ENCODE measurements at regions of chr18 and their contacts with region 1.

Region 1: GRCh38 chr18:80108728-80109675 is at the start of gene ADNP2:
- DNase-seq: peak; percentile 97
- H3K4me3 ChIP-seq: peak within 1 kb of the TSS; percentile 68 to 89 (median 80)
- H3K27ac ChIP-seq: peak within 1 kb of the TSS; percentile 93 to 96 (median 95)
- H3K4me1 ChIP-seq: peaks cover 13 to 60% (median 38%) of the 10 kb centered on the region in 4 donors
- H3K27me3 ChIP-seq: no peaks in the 10 kb centered on the region
- CTCF ChIP-seq: no peak
- EP300 ChIP-seq: no peak
- POLR2A ChIP-seq: peak; percentile 10
- total RNA-seq, gene ADNP2: 17.1 to 18.9 (median 17.3) TPM

Region 2: DNA sequence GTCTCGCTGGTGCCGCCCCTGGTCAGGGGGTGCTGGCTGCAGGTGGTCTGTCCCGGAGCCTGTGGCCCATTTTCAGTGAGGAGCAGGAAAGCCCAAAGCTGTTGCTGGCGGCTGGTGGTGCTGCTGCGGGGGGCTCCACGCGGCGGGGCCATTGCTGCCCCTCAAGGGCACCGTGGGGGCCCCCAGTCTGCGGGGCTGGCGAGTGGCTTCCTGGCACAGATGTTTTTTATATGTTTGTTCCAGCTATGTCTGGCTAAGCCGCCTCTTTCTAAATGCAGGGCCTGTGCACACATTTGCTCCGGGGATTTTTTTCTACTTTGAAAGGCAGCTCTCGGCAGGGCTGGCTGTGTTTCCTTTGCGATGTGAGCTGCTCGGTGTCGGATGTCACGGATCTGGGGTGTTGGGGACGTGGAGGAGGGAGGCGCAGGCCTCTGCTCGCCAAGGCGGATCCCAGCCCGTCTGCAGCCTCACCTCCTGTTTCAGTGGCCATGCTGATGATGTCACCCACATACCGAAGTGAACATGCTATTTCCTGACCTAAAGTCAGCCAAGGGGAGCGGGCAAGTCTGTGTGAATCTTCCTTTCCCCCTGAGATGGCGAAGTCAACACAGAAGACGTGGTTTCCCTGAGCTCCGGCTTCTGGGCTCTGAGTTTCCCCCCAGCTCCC is 541.4 kb before region 1 on chr18:
- intact Hi-C with region 1: no loop called
- DNase-seq: no peak
- H3K4me3 ChIP-seq: peak overlapping the region in 1 of 4 donors; percentile 7
- H3K27ac ChIP-seq: peak overlapping the region in 3 of 4 donors; percentile 9 to 34 (median 28)
- H3K4me1 ChIP-seq: peaks cover 8 to 13% (median 10%) of the 10 kb centered on the region in 4 donors
- H3K27me3 ChIP-seq: no peaks in the 10 kb centered on the region
- CTCF ChIP-seq: no peak
- EP300 ChIP-seq: no peak
- POLR2A ChIP-seq: no peak

Region 3: GRCh38 chr18:79678665-79679110 is 430.3 kb before region 1 on chr18:
- intact Hi-C with region 1: no loop called
- DNase-seq: peak; percentile 96
- H3K4me3 ChIP-seq: peak overlapping the region; percentile 86 to 94 (median 93)
- H3K27ac ChIP-seq: peak overlapping the region; percentile 91 to 99 (median 96)
- H3K4me1 ChIP-seq: peaks cover 36 to 52% (median 47%) of the 10 kb centered on the region in 4 donors
- H3K27me3 ChIP-seq: no peaks in the 10 kb centered on the region
- CTCF ChIP-seq: no peak
- EP300 ChIP-seq: no peak
- POLR2A ChIP-seq: no peak

Region 4: DNA sequence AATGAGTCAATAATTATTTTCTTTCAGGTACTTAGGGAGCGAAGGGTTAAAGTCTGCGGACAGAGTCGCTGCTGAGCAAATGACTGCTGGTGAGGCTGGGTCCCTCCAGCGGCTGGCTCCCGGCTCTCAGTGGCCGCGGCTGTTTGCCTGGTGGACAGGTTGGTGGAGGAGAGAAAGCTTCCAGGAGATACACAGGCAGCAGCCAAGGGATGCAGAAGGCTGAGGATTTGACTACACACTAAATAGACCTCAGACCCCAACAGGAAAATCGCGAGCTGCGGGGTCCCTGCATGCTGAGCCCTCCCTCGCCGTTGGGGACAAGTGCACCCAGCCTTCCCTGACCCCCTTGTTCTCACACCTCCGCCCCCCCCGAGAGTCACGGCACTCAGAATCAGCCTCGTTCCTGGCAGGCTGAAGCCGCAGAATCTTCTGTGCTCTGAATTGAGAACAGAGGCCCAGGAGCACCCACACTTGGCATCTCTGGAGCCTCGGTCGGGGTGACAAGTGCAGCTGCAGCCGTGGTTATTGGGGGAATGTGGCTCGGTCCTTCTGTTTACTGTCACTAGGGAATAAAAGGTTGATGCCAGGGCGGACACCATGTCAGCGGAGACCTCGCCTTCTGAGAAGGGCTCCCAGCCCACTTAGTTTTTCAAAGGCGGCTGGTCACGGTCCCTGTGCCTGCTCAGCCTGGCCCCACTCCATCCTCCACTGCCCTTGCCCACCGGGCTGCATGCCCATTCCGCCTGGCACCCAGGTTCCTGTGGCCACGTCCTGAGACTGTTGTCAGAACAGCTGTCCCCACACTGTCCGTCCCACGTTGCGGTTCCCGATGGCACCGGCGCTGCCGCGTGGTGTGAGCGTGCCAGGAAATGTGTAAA is 231.5 kb before region 1 on chr18:
- intact Hi-C with region 1: no loop called
- DNase-seq: no peak
- H3K4me3 ChIP-seq: no peak overlapping the region
- H3K27ac ChIP-seq: no peak overlapping the region
- H3K4me1 ChIP-seq: peaks cover 0 to 9% (median 0%) of the 10 kb centered on the region in 4 donors
- H3K27me3 ChIP-seq: peaks cover 0 to 55% (median 0%) of the 10 kb centered on the region in 4 donors
- CTCF ChIP-seq: no peak
- EP300 ChIP-seq: no peak
- POLR2A ChIP-seq: no peak

Region 5: DNA sequence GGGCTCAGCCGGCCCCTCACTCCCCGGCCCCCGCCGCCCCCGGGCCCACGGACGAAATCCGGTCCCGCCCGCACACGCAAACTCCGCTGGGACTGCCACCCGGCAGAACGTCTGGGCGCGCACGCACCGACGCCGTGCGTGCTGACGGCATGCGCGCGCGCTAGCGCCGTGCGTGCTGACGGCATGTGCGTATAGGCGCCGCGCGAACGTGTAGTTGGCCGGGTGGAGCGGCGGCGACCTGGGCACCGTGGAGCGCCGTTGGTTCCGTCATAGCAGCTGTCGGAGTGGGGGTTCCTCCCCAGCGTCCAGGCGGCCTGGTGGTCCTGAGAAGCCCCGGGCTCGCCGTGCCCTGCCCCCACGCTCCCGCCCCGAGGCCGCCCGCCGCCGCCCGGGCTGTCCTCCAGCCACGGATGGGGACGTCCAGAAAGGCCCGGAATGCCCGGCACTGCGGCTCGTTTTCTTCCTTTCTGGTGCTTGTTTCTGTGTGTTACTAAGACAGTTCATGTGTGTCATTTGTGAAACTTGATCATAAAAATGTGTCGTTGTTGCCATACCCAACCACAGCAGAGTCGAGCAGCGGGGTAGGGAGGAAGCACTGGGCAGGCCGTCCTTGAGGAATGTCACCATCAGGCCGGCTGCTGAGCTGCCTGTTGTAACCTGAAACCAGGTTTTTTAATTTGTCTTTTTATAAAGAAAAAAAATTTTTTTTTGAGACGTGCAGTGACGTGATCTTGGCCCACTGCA is 120.4 kb before region 1 on chr18 and contains the start of gene TXNL4A:
- intact Hi-C with region 1: loop called (anchors 2 kb)
- DNase-seq: no peak
- H3K4me3 ChIP-seq: peak within 1 kb of the TSS; percentile 81 to 98 (median 91)
- H3K27ac ChIP-seq: peak within 1 kb of the TSS; percentile 94 to 99 (median 98)
- H3K4me1 ChIP-seq: peaks cover 19 to 47% (median 32%) of the 10 kb centered on the region in 4 donors
- H3K27me3 ChIP-seq: no peaks in the 10 kb centered on the region
- CTCF ChIP-seq: no peak
- EP300 ChIP-seq: no peak
- POLR2A ChIP-seq: peak; percentile 82
- total RNA-seq, gene TXNL4A: 21.6 to 44.9 (median 38.9) TPM

Region 6: GRCh38 chr18:80046961-80047541 is 62.0 kb before region 1 on chr18:
- intact Hi-C with region 1: no loop called
- DNase-seq: no peak
- H3K4me3 ChIP-seq: no peak overlapping the region
- H3K27ac ChIP-seq: no peak overlapping the region
- H3K4me1 ChIP-seq: no peaks in the 10 kb centered on the region
- H3K27me3 ChIP-seq: no peaks in the 10 kb centered on the region
- CTCF ChIP-seq: no peak
- EP300 ChIP-seq: no peak
- POLR2A ChIP-seq: no peak

Region 7: DNA sequence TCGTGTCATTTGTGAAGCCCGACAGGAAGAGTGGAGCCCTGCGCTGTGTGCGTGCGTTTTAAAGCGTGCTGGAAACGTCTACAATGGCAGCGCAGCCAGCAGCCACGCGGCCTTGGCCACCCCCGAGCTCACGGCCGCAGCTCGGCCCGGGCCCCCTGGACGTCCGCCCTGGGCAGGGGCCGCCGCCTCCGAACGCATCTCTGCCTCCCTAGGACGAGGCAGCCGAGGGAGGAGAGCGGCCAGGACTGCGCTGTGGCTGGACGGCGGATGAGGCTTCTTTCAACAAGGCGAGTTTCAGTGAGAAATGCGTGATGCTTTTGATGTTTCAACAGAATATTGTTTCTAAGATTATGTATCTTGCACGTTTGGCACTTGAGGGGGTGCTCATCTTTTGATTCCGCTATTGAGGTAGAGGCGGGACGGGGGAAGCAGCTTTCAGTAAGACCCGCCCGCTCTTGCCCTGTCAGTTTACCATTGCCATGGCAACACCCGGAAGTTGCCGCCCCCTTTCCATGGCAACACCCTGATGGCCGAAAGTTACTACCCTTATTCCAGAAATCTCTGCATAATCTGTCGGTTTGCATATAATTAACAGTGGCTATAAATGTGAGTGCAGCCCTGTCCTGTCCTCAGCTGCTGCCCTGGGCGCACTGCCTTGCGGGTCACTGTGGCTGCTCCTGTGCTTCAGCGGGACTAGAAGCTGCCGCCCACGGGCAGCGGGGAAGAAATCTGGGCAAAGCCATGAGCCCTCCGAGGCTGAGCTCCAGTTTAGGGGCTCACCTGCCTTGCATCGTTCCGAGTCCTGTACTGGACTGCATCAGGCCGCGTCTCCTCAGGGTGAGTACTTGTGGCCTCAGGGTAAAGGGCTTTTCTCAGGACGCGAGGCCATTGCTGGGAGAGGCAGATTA is 38.7 kb after region 1 on chr18:
- intact Hi-C with region 1: loop called (anchors 5 kb)
- DNase-seq: peak; percentile 94
- H3K4me3 ChIP-seq: peak overlapping the region; percentile 60 to 63 (median 60)
- H3K27ac ChIP-seq: peak overlapping the region; percentile 18 to 74 (median 50)
- H3K4me1 ChIP-seq: peaks cover 0 to 22% (median 12%) of the 10 kb centered on the region in 4 donors
- H3K27me3 ChIP-seq: no peaks in the 10 kb centered on the region
- CTCF ChIP-seq: no peak
- EP300 ChIP-seq: no peak
- POLR2A ChIP-seq: no peak

Measured in esophagus muscularis mucosa (tissue), 4 donors.